CD4-positive, alpha-beta memory T cell (primary cell): ENCODE measurements at regions of chr11 and their contacts with region 1.

Region 1: DNA sequence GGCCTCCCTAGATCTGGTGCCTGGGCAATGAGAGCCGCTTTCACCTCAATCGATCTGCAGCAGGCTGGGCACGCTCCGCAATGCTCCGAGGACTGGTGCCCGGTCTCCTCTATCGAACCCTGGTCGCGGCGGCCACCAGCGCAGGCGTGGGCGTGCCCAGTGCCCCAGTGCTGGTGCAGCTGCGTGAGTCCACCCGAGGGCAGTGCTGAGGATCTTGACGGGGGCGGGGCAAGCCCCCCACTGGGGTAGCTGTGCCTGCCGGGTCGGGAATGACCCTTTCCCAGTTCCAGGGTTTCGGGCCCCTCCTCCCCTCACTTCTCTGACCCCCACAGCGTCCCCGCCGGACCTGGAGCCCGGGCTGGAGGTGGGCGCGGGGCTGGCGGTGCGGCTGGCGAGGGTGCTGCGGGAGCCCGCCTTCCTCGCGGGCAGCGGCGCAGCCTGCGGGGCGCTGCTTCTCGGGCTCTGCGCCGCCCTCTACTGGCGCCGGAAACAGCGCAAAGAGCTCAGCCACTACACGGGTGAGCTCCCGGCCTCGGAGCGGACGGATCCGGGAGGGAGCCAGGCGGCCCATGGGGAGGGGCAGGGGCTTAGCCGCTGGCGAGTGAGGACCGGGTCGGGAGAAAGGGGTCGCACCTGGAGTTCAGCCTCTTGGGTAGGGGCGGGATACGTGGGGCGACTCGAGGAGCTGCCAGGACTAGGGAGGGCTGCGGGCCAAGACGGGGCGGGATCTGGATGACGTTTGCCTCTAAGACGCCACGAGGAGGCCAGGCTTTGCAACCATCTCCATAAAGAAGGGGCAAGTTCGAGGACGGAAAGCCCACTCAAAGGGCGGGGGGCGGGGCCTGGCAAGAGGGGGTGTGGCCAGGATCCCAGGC is 10.9 kb downstream of the ROBO3 start:
- DNase-seq: peak; percentile 77 to 84 (median 79)
- H3K4me3 ChIP-seq: peak overlapping the region; percentile 11 to 58
- H3K4me3 Mint-ChIP-seq: peak overlapping the region; percentile 86 to 91 (median 90)
- H3K27ac ChIP-seq: peak overlapping the region; percentile 53
- H3K27ac Mint-ChIP-seq: peak overlapping the region; percentile 79 to 96 (median 90)
- H3K4me1 ChIP-seq: peaks cover 13% of the 10 kb centered on the region
- H3K4me1 Mint-ChIP-seq: peaks cover 4 to 29% (median 19%) of the 10 kb centered on the region in 4 donors
- H3K27me3 ChIP-seq: no peaks in the 10 kb centered on the region
- H3K27me3 Mint-ChIP-seq: peaks cover 18 to 25% of the 10 kb centered on the region in 2 donors

Region 2: DNA sequence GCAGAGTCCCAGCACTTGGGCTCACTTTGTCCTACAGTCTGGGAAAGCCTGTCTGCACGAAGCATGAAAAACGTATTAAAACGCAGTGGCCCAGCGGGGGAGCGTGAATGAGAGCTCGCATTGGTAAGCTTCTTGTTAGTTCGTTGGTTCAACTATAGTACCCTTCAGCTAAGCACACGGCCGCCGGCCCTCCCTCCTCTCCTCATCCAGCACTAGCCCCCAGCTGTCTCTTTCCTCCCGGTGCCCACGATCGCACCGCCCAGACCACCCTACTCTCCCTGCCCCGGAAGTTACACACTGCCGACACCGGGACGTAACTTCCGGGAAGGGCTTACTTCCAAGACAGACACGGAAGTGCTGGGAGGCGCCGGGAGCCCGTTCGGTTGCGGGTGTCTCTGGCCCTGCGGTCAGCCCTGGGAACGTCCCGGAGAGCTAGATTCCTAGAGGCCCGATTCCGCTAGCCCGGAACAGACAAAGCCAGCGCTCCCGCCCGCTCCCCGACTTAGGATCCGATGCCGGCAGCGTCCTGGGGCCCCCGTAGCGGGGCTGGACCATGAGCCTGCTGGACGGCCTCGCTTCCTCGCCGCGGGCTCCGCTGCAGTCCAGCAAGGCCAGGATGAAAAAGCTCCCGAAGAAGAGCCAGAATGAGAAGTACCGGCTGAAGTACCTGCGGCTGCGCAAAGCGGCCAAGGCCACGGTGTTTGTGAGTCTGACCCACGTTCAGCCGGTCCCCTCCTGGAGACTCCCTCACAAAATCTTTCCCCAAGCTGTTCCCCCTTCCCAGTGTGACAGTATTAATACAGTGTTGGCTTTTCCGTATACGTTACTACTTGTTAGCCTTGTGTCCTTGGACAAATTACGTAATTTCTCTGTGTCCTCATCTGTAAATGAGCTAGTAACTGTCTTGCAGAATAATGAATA is 253.4 kb before region 1 on chr11 and contains the start of gene TBRG1:
- CTCF ChIA-PET with region 1: interaction called, 8 read pairs
- POLR2A ChIA-PET with region 1: interaction called, 3 read pairs
- intact Hi-C with region 1: loop called (anchors 2 kb)
- DNase-seq: peak; percentile 76 to 88 (median 82)
- H3K4me3 ChIP-seq: peak within 1 kb of the TSS; percentile 63 to 86
- H3K4me3 Mint-ChIP-seq: peak within 1 kb of the TSS; percentile 93 to 100 (median 98)
- H3K27ac ChIP-seq: peak within 1 kb of the TSS; percentile 95
- H3K27ac Mint-ChIP-seq: peak within 1 kb of the TSS; percentile 92 to 100 (median 99)
- H3K4me1 ChIP-seq: peaks cover 34% of the 10 kb centered on the region
- H3K4me1 Mint-ChIP-seq: peaks cover 23 to 53% (median 38%) of the 10 kb centered on the region in 4 donors
- H3K27me3 ChIP-seq: no peaks in the 10 kb centered on the region
- H3K27me3 Mint-ChIP-seq: peaks cover 1 to 6% of the 10 kb centered on the region in 2 donors
- total RNA-seq, gene TBRG1: 69.3 to 75.8 TPM

Region 3: DNA sequence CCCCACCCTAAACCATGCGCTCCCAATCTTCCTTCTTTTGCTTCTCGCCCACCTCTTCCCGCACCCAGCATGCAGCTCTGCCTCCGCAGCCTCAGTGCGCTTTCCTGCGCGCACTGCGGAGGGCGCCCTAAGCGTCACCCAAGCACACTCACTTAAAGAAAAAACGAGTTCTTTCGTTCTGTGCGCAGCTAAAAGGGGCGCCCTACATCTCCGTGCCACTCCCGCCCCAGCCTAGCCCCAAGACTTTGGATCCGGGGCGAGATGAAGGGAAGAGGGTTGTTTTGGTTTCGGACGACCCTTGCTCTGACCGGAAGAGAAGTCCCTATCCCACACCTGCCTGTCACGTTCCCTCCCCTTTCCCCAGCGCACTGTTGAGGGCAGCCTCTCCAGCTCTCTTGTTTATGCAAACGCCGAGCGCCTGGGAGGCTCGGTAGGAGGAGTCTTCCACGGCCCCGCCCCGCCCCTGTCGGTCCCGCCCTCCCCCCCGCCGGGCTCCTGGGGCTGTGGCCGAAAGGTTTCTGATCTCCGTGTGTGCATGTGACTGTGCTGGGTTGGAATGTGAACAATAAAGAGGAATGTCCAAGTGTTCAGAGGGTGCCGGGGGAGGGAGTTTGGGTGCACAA is 129.4 kb before region 1 on chr11:
- CTCF ChIA-PET with region 1: no interaction called
- POLR2A ChIA-PET with region 1: no interaction called
- intact Hi-C with region 1: loop called (anchors 2 kb)
- DNase-seq: peak; percentile 80 to 86 (median 85)
- H3K4me3 ChIP-seq: peak overlapping the region; percentile 76 to 97
- H3K4me3 Mint-ChIP-seq: peak overlapping the region; percentile 96 to 99 (median 98)
- H3K27ac ChIP-seq: peak overlapping the region; percentile 58
- H3K27ac Mint-ChIP-seq: peak overlapping the region; percentile 83 to 98 (median 94)
- H3K4me1 ChIP-seq: peaks cover 6% of the 10 kb centered on the region
- H3K4me1 Mint-ChIP-seq: peaks cover 6 to 21% (median 9%) of the 10 kb centered on the region in 4 donors
- H3K27me3 ChIP-seq: no peaks in the 10 kb centered on the region
- H3K27me3 Mint-ChIP-seq: peaks cover 0 to 1% of the 10 kb centered on the region in 2 donors

Region 4: GRCh38 chr11:124837491-124837856 is 38.7 kb before region 1 on chr11:
- CTCF ChIA-PET with region 1: interaction called, 12 read pairs
- POLR2A ChIA-PET with region 1: no interaction called
- intact Hi-C with region 1: no loop called
- DNase-seq: peak in 1 of 5 donors; percentile 10
- H3K4me3 ChIP-seq: no peak overlapping the region
- H3K4me3 Mint-ChIP-seq: peak overlapping the region in 1 of 8 donors; percentile 84
- H3K27ac ChIP-seq: no peak overlapping the region
- H3K27ac Mint-ChIP-seq: peak overlapping the region in 1 of 7 donors; percentile 74
- H3K4me1 ChIP-seq: peaks cover 10% of the 10 kb centered on the region
- H3K4me1 Mint-ChIP-seq: peaks cover 8 to 21% (median 14%) of the 10 kb centered on the region in 4 donors
- H3K27me3 ChIP-seq: peaks cover 41% of the 10 kb centered on the region
- H3K27me3 Mint-ChIP-seq: peaks cover 43 to 70% of the 10 kb centered on the region in 2 donors

Region 5: GRCh38 chr11:124865921-124866583 is 10.1 kb before region 1 on chr11:
- CTCF ChIA-PET with region 1: interaction called, 18 read pairs
- POLR2A ChIA-PET with region 1: interaction called, 4 read pairs
- intact Hi-C with region 1: no loop called
- DNase-seq: peak in 4 of 5 donors; percentile 42 to 52 (median 44)
- H3K4me3 ChIP-seq: no peak overlapping the region
- H3K4me3 Mint-ChIP-seq: peak overlapping the region in 5 of 8 donors; percentile 35 to 71 (median 44)
- H3K27ac ChIP-seq: no peak overlapping the region
- H3K27ac Mint-ChIP-seq: no peak overlapping the region
- H3K4me1 ChIP-seq: peaks cover 39% of the 10 kb centered on the region
- H3K4me1 Mint-ChIP-seq: peaks cover 26 to 70% (median 47%) of the 10 kb centered on the region in 4 donors
- H3K27me3 ChIP-seq: peaks cover 78% of the 10 kb centered on the region
- H3K27me3 Mint-ChIP-seq: peaks cover 73 to 77% of the 10 kb centered on the region in 2 donors

Region 6: GRCh38 chr11:124920870-124921609 is 44.9 kb after region 1 on chr11:
- CTCF ChIA-PET with region 1: interaction called, 5 read pairs
- POLR2A ChIA-PET with region 1: interaction called, 10 read pairs
- intact Hi-C with region 1: loop called (anchors 2 kb)
- DNase-seq: peak; percentile 68 to 78 (median 71)
- H3K4me3 ChIP-seq: peak overlapping the region in 1 of 2 donors; percentile 62
- H3K4me3 Mint-ChIP-seq: peak overlapping the region; percentile 74 to 88 (median 80)
- H3K27ac ChIP-seq: no peak overlapping the region
- H3K27ac Mint-ChIP-seq: peak overlapping the region in 4 of 7 donors; percentile 47 to 65 (median 53)
- H3K4me1 ChIP-seq: peaks cover 14% of the 10 kb centered on the region
- H3K4me1 Mint-ChIP-seq: peaks cover 15 to 28% (median 23%) of the 10 kb centered on the region in 4 donors
- H3K27me3 ChIP-seq: no peaks in the 10 kb centered on the region
- H3K27me3 Mint-ChIP-seq: peaks cover 0 to 3% of the 10 kb centered on the region in 2 donors

Region 7: DNA sequence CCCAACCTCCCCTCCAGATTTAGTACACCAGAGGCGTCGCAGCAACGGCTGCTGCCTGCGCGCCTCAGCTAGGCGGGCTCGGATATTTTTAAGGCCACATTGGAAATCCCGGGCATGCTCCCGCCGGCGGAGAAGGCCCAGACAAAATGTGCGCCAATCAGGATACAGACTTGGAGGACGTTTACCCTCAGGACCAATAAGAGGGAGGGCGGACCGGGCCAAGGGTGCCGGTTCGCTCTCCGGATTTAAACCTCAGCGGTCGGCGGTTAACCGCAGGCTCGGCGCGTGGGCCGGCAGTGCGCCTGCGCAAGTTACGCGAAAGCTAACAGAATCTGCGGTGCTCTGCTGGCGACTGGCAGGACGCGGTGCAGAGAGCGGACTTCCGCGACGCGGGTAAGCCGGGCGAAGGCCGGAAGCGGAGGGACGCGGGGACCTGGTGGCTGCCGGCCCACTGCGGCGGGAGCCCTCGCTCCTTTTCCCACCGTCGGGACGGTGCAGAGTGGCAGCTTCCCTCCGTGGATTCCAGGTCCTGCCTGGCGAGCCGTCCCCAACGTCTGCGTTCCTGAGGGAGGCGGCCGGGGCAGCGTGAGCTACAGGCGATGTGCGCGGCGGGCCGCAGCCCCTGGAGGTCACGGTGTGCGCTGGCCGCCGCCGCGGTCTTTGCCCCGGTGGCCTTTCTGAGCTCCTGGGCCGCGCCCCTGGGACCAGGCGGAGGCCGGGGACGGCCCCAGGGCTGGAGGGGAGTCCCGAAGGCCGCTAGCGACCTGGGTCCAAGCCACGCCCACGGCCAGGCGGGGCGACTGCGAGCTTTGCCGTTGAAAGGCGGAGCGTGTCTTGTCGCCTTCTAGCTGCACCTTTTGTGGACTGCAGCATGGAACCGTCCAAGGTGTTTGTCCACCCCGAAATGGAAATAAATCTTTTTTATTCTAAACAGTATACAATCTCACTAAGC is 1011.5 kb after region 1 on chr11 and contains the start of gene HYLS1:
- CTCF ChIA-PET with region 1: interaction called, 4 read pairs
- POLR2A ChIA-PET with region 1: no interaction called
- intact Hi-C with region 1: loop called (anchors 5 kb)
- DNase-seq: peak; percentile 96 to 99 (median 96)
- H3K4me3 ChIP-seq: peak within 1 kb of the TSS; percentile 67 to 73
- H3K4me3 Mint-ChIP-seq: peak within 1 kb of the TSS; percentile 89 to 99 (median 94)
- H3K27ac ChIP-seq: peak within 1 kb of the TSS; percentile 79
- H3K27ac Mint-ChIP-seq: peak within 1 kb of the TSS; percentile 96 to 99 (median 98)
- H3K4me1 ChIP-seq: peaks cover 33% of the 10 kb centered on the region
- H3K4me1 Mint-ChIP-seq: peaks cover 20 to 45% (median 30%) of the 10 kb centered on the region in 4 donors
- H3K27me3 ChIP-seq: no peaks in the 10 kb centered on the region
- H3K27me3 Mint-ChIP-seq: peaks cover 0 to 6% of the 10 kb centered on the region in 2 donors
- total RNA-seq, gene HYLS1: 8.1 to 8.2 TPM